ENCODE measurements at regions of chr11 and their contacts with region 1.

Region 1: GRCh38 chr11:3854977-3855807 is at the start of gene STIM1:
- DNase-seq: peak; percentile 98
- ATAC-seq: peak; percentile 77
- H3K4me3 Mint-ChIP-seq: peak within 1 kb of the TSS; percentile 88
- H3K27ac Mint-ChIP-seq: peak within 1 kb of the TSS; percentile 99
- H3K4me1 Mint-ChIP-seq: peaks cover 59% of the 10 kb centered on the region
- H3K27me3 Mint-ChIP-seq: no peaks in the 10 kb centered on the region
- total RNA-seq, gene STIM1: 97.3 to 104 TPM

Region 2: DNA sequence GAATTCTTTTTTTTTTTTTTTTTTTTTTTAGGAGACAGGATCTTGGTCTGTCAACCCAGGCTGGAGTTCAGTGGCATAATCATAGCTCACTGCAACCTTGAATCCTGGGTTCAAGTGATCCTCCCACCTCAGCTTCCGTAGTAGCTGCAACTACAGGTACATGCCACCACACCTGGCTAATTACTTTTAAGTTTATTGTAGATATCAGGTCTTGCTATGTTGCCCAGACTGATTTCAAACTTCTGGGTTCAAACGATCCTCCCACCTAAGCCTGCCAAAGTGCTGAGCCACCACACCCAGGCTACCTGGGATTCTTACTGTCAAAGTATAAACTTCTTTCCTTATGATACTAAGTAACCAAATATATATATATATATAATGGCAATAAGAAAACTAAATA is 133.1 kb before region 1 on chr11:
- CTCF ChIA-PET with region 1: no interaction called
- POLR2A ChIA-PET with region 1: no interaction called
- DNase-seq: no peak
- ATAC-seq: no peak
- H3K4me3 Mint-ChIP-seq: no peak overlapping the region
- H3K27ac Mint-ChIP-seq: no peak overlapping the region
- H3K4me1 Mint-ChIP-seq: no peaks in the 10 kb centered on the region
- H3K27me3 Mint-ChIP-seq: no peaks in the 10 kb centered on the region

Region 3: DNA sequence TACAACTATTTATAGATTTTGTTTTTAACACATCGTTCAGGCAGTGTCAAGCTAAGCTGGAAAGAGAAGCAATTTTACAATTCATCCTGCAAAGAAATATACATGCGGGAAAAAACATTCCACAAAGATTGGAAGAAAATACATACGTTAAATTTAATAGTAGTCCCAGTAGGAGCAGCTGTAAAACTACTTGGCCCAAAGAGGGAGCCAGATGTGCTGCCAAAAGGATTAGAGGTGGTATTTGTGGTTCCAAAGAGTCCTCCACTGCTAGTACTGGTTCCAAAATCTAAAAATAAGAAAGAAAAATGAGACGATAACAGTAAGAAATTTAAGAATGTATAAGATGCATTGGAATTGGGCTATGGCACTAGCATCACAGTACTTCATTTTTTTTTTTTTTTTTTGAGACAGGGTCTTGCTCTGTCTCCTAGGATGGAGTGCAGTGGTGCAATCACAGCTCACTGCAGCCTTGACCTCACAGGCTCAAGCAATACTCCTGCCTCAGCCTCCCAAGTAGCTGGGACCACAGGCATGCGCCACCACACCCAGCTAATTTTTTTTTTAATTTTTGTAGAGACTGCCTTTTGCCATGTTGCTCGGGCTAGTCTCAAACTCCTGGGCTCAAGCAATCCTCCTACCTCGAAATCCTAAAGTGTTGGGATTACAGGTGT is 79.3 kb before region 1 on chr11:
- CTCF ChIA-PET with region 1: no interaction called
- POLR2A ChIA-PET with region 1: no interaction called
- DNase-seq: no peak
- ATAC-seq: no peak
- H3K4me3 Mint-ChIP-seq: no peak overlapping the region
- H3K27ac Mint-ChIP-seq: no peak overlapping the region
- H3K4me1 Mint-ChIP-seq: no peaks in the 10 kb centered on the region
- H3K27me3 Mint-ChIP-seq: no peaks in the 10 kb centered on the region

Region 4: GRCh38 chr11:3824714-3825472 is 30.3 kb before region 1 on chr11:
- CTCF ChIA-PET with region 1: interaction called, 458 read pairs
- POLR2A ChIA-PET with region 1: interaction called, 4 read pairs
- DNase-seq: peak; percentile 87
- ATAC-seq: peak; percentile 93
- H3K4me3 Mint-ChIP-seq: no peak overlapping the region
- H3K27ac Mint-ChIP-seq: peak overlapping the region; percentile 46
- H3K4me1 Mint-ChIP-seq: peaks cover 38% of the 10 kb centered on the region
- H3K27me3 Mint-ChIP-seq: no peaks in the 10 kb centered on the region

Region 5: GRCh38 chr11:3873712-3874349 is 18.6 kb after region 1 on chr11:
- CTCF ChIA-PET with region 1: interaction called, 133 read pairs
- POLR2A ChIA-PET with region 1: interaction called, 16 read pairs
- DNase-seq: no peak
- ATAC-seq: no peak
- H3K4me3 Mint-ChIP-seq: no peak overlapping the region
- H3K27ac Mint-ChIP-seq: no peak overlapping the region
- H3K4me1 Mint-ChIP-seq: peaks cover 72% of the 10 kb centered on the region
- H3K27me3 Mint-ChIP-seq: no peaks in the 10 kb centered on the region

Region 6: GRCh38 chr11:3905080-3905953 is 50.1 kb after region 1 on chr11:
- CTCF ChIA-PET with region 1: interaction called, 27 read pairs
- POLR2A ChIA-PET with region 1: interaction called, 14 read pairs
- DNase-seq: peak; percentile 79
- ATAC-seq: peak; percentile 96
- H3K4me3 Mint-ChIP-seq: no peak overlapping the region
- H3K27ac Mint-ChIP-seq: peak overlapping the region; percentile 66
- H3K4me1 Mint-ChIP-seq: peaks cover 70% of the 10 kb centered on the region
- H3K27me3 Mint-ChIP-seq: no peaks in the 10 kb centered on the region

Region 7: DNA sequence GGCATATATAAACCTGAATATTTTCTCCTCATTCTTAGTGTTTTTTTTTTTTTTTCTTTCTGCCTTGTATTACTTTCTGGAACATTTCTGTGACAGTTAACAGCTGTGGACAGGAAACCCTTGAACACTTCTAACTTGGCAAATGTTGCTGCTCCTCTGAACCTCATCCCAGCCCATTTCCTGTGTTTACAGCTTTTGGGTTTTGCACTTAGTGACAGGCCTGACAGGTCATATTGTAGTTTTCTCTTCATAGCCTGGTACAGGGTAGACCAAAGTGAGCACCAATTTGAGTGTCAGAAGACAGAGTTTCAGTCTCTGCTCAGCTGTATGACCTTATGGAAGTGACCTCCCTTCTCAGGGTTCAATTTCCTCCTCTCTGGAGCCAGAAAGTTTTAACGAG is 91.9 kb after region 1 on chr11:
- CTCF ChIA-PET with region 1: interaction called, 74 read pairs
- POLR2A ChIA-PET with region 1: interaction called, 19 read pairs
- DNase-seq: peak; percentile 83
- ATAC-seq: peak; percentile 76
- H3K4me3 Mint-ChIP-seq: peak overlapping the region; percentile 69
- H3K27ac Mint-ChIP-seq: peak overlapping the region; percentile 96
- H3K4me1 Mint-ChIP-seq: peaks cover 93% of the 10 kb centered on the region
- H3K27me3 Mint-ChIP-seq: no peaks in the 10 kb centered on the region

Region 8: GRCh38 chr11:4025248-4025966 is 170.2 kb after region 1 on chr11:
- CTCF ChIA-PET with region 1: interaction called, 13 read pairs
- POLR2A ChIA-PET with region 1: no interaction called
- DNase-seq: no peak
- ATAC-seq: no peak
- H3K4me3 Mint-ChIP-seq: no peak overlapping the region
- H3K27ac Mint-ChIP-seq: peak overlapping the region; percentile 3
- H3K4me1 Mint-ChIP-seq: peaks cover under 1% of the 10 kb centered on the region
- H3K27me3 Mint-ChIP-seq: no peaks in the 10 kb centered on the region

Region 9: DNA sequence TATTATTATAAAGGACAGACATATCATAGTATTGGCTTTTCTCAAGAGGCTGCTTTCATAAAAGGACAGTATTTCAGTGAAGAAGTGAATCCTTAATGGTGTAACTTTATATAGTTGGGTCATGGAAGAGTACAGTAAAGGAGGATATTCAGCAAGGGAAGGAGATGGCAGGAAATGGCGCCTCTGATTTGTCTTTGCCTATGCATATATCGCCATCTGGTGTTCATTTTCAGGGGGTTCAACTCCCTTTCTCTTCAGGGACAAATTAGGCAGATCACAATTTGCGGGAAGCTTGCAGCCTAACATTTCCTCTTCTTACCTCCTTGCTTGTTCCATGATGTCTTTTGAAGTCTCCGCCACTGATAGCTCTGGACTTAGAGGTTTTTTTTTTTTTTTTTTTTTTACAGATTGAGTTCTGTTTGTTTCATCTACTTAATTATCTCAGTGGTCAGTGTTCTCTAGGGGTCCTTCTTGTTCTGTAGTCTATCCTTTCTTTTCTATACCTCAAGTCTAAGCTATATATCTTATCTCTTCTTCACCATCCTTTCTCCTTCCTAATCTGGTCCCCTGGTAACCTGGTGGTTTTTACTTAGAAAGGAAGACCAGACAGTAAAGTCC is 217.6 kb after region 1 on chr11:
- CTCF ChIA-PET with region 1: interaction called, 630 read pairs
- POLR2A ChIA-PET with region 1: interaction called, 30 read pairs
- DNase-seq: peak; percentile 68
- ATAC-seq: peak; percentile 71
- H3K4me3 Mint-ChIP-seq: no peak overlapping the region
- H3K27ac Mint-ChIP-seq: no peak overlapping the region
- H3K4me1 Mint-ChIP-seq: peaks cover 25% of the 10 kb centered on the region
- H3K27me3 Mint-ChIP-seq: no peaks in the 10 kb centered on the region

Region 10: GRCh38 chr11:4140067-4140636 is 285.0 kb after region 1 on chr11:
- CTCF ChIA-PET with region 1: no interaction called
- POLR2A ChIA-PET with region 1: no interaction called
- DNase-seq: no peak
- ATAC-seq: no peak
- H3K4me3 Mint-ChIP-seq: no peak overlapping the region
- H3K27ac Mint-ChIP-seq: no peak overlapping the region
- H3K4me1 Mint-ChIP-seq: no peaks in the 10 kb centered on the region
- H3K27me3 Mint-ChIP-seq: no peaks in the 10 kb centered on the region